ENCODE measurements at regions of chr12 and their contacts with region 1.

Region 1: GRCh38 chr12:56104109-56104814 is at the start of gene PA2G4:
- DNase-seq: peak; percentile 95

Region 2: GRCh38 chr12:54840317-54840771 is 1263.9 kb before region 1 on chr12:
- CTCF ChIA-PET with region 1: no interaction called
- POLR2A ChIA-PET with region 1: no interaction called
- DNase-seq: no peak

Region 3: DNA sequence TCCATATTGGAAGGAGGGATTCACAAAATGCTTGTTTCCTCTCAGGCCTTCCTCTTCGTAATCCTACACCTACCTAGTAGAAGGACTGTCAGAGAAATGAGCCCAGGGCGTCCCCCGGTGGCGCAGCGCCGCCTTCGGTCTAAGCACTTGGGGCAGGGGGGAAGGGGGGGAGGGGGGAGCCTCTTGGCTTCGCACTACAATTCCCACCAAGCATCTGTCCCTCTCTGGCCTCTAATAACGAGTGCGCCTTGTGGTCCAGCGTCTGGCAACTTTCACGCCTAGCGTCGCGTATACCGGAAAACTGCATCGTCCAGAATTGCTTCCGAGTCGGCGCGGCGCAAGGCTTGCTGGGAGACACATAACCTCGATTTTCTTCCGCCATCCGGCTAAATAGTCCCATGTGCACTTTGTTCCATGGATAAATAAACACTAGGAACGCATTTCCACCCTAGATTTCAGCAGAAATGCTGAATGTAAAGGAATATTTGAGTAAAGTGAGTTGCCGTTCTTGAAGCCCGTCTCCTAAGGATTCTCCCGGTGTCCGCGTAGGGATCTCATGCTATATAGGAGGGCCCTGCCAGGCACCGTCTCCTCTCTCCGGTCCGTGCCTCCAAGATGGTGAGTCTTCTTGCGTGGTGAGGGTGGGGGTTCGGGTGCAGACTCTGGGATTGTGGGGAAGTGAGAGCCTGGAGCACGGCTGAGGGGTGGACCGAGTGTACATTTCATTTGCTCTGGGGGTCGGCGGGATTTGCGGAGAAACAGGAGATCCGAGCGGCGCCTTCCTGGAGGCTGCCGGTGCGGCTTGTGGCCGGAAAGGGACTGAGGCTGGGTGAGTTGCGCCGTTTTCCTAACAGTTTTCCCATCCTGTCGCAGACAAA is 62.5 kb before region 1 on chr12 and contains the start of gene RPS26:
- CTCF ChIA-PET with region 1: interaction called, 3 read pairs
- POLR2A ChIA-PET with region 1: interaction called, 19 read pairs
- DNase-seq: peak; percentile 89

Region 4: DNA sequence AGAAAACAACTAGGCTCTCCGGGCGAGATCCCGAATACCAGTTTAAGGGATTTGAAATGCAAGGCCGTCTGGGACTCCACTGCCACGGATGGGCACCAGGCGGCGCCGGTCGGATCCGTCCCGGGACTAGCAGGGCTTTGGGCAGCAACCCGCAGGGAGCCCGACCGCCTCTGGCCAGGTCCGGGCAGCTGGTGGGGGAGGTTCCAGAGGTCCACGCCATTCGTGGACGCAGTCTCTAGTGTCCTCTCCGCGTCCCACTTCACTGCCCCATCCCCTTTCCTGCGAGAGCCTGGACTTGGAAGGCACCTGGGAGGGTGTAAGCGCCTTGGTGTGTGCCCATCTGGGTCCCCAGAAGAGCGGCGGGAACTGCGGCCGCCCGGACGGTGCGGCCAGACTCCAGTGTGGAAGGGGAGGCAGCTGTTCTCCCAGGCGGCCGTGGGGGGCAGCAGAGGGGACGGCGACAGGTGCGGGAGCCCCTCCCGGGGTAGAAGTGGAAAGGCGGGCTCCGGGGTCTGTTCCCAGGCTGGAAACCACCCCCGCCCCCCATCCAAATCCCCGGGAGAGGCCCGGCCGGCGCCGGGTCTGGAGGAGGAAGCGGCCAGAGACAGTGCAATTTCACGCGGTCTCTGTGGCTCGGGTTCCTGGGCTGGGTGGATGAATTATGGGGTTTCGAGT is 25.1 kb before region 1 on chr12:
- CTCF ChIA-PET with region 1: no interaction called
- POLR2A ChIA-PET with region 1: interaction called, 65 read pairs
- DNase-seq: peak; percentile 82

Region 5: GRCh38 chr12:56084958-56085543 is 19.2 kb before region 1 on chr12:
- CTCF ChIA-PET with region 1: interaction called, 9 read pairs
- POLR2A ChIA-PET with region 1: interaction called, 65 read pairs
- DNase-seq: peak; percentile 68

Region 6: DNA sequence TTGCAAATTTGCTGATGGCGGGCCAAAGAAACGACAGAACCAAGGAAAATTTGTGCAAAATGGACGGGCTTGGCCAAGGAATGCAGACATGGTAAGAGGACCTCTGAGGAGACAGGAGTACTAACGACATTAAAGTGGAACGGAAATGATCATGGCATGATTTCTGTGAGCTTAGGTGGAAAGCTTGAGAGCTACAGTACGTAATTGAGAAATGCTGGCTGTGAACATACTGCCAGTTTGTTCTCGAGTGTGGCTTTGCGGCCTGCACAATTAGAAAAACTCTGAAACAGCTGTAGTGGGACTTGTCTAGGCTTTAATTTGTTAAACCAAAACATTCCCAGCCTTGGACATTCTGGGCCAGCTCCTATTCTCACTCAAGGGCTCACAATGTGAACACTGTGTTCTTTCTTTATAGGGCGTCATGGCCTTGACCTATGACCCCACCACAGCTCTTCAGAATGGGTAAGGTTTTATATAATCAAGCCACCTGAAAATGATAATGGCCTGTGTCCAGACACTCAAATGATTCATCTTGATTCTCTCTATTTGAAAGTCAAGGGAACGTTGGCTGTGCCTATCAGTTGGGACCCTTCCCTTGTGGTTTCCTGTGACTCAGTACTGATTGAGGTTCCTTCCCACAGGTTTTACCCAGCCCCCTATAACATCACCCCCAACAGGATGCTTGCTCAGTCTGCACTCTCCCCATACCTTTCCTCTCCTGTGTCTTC is 477.3 kb after region 1 on chr12:
- CTCF ChIA-PET with region 1: no interaction called
- POLR2A ChIA-PET with region 1: no interaction called
- DNase-seq: no peak